GM12878 (cell line): ENCODE measurements at regions of chr13 and their contacts with region 1.

Region 1: GRCh38 chr13:56201834-56202233 is 938.9 kb upstream of the PRR20A start:
- DNase-seq: no peak
- ATAC-seq: no peak
- H3K4me3 ChIP-seq: no peak overlapping the region
- H3K27ac ChIP-seq: no peak overlapping the region
- H3K4me1 ChIP-seq: no peaks in the 10 kb centered on the region
- H3K27me3 ChIP-seq: no peaks in the 10 kb centered on the region
- CTCF ChIP-seq: no peak
- EP300 ChIP-seq: no peak
- POLR2A ChIP-seq: no peak
- RAD21 ChIP-seq: no peak

Region 2: DNA sequence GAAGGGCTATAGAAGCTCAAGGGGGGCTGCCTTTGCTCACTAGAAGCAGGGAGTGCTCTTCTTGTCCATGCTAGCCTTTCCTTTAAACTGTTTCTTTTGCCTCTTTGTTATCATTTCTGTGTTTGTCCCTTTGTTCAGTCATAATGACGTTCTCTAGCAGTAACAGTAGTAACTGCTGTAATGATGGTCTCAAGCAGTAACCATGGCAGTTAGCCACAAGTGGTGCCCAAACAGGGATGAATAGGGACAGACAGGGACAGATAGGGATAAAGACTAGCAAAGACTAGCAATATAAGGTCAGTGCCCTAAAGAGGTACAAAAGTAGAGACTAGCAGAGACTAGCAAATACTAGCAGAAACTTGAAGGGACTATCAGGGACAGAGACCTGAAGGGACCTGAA is 69.9 kb after region 1 on chr13:
- CTCF ChIA-PET with region 1: no interaction called
- POLR2A ChIA-PET with region 1: no interaction called
- RAD21 ChIA-PET with region 1: no interaction called
- SMC1A ChIA-PET with region 1: no interaction called
- in situ Hi-C with region 1: no loop called
- intact Hi-C with region 1: loop called (anchors 10 kb)
- DNase-seq: no peak
- ATAC-seq: no peak
- H3K4me3 ChIP-seq: no peak overlapping the region
- H3K27ac ChIP-seq: no peak overlapping the region
- H3K4me1 ChIP-seq: no peaks in the 10 kb centered on the region
- H3K27me3 ChIP-seq: no peaks in the 10 kb centered on the region
- CTCF ChIP-seq: no peak
- EP300 ChIP-seq: no peak
- POLR2A ChIP-seq: no peak
- RAD21 ChIP-seq: no peak